ENCODE measurements at regions of chr5 and their contacts with region 1.

Region 1: DNA sequence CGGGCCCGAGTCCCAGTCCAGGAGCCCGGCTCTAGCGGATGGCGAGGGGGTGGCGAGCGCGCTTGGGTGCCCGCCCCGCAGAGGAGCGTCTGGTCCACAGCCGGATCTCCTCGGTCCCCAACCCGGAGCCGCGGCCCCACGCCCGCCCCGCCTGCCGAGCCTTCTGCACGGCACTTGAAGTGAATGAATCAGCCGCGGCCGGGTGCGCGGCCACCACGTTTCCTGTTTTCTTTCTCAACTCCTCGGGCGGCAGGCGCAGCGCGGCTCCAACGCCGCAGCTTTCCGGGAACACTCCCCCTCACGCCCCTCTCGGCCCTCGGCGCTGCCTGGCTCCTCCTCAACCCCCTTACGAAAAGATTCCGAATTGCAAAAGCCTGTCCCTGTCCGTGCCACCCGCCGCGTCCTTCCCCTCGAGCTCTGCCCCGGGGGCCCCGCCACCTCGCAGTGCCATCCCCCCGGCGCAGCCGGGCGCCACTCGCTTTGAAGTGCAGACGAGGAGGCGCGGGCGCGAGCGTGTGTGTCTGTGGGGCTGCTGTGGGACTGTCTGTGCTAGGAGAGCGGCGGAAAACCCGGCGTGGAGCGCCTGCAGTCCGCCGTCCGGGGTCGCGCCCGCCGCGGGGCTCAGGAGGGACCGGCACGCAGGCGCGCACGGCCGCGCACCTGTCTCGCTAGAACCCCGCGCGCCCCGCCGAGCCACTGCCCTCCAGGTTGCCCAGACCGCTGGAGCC is 456.6 kb downstream of the RAB3C start:
- DNase-seq: peak; percentile 61
- ATAC-seq: peak; percentile 75
- H3K4me3 Mint-ChIP-seq: peak overlapping the region; percentile 94
- H3K27ac Mint-ChIP-seq: peak overlapping the region; percentile 85
- H3K4me1 Mint-ChIP-seq: peaks cover 30% of the 10 kb centered on the region
- H3K27me3 Mint-ChIP-seq: peaks cover 14% of the 10 kb centered on the region
- CTCF ChIP-seq: no peak

Region 2: GRCh38 chr5:59062986-59063683 is 23.7 kb after region 1 on chr5:
- CTCF ChIA-PET with region 1: no interaction called
- POLR2A ChIA-PET with region 1: no interaction called
- intact Hi-C with region 1: no loop called
- DNase-seq: no peak
- ATAC-seq: no peak
- H3K4me3 Mint-ChIP-seq: no peak overlapping the region
- H3K27ac Mint-ChIP-seq: no peak overlapping the region
- H3K4me1 Mint-ChIP-seq: no peaks in the 10 kb centered on the region
- H3K27me3 Mint-ChIP-seq: no peaks in the 10 kb centered on the region
- CTCF ChIP-seq: no peak

Region 3: DNA sequence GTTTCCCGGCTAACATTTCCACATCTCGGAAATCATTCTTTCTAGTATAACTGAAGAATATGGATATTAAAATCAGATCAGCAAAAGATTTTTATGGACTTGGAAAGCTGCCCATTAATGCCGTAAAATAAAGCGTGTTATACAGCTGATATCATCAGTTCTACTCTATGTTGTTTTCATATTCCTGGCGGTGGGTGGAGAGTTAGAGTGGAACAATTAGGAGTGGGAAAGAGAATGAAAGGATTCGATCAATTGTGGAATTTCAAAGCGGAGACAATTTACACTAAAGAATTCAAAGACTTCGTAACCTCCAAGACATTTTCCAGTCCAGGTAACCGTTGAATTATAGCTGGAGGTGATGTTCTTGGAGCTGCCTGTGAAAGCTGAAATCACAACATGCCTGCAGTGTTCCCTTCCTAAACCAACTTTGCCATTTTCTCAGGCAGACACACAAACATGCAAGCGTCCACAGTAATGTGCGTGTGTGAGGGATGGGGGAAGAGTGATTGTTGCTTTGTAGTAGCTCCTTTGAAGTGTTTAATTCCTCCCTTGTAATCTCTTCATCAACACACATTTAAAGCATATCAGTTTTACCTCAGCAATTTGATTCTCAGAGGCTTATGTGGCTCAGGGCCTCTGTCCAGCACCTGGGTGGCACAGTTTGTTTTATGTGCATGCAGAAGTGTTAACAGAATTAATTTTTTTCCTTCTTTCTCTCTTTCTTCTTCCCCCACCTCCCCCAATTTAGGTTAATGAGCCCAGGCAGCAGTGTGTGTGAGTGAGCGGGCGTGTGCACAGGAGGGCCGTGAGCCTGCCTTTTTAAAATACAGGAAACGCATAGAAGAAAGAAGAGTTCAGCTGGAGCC is 87.5 kb after region 1 on chr5:
- CTCF ChIA-PET with region 1: interaction called, 4 read pairs
- POLR2A ChIA-PET with region 1: interaction called, 24 read pairs
- intact Hi-C with region 1: loop called (anchors 1 kb)
- DNase-seq: no peak
- ATAC-seq: no peak
- H3K4me3 Mint-ChIP-seq: no peak overlapping the region
- H3K27ac Mint-ChIP-seq: no peak overlapping the region
- H3K4me1 Mint-ChIP-seq: peaks cover 7% of the 10 kb centered on the region
- H3K27me3 Mint-ChIP-seq: no peaks in the 10 kb centered on the region
- CTCF ChIP-seq: no peak

Region 4: GRCh38 chr5:59174248-59174844 is 134.9 kb after region 1 on chr5:
- CTCF ChIA-PET with region 1: interaction called, 31 read pairs
- POLR2A ChIA-PET with region 1: interaction called, 3 read pairs
- intact Hi-C with region 1: loop called (anchors 1 kb)
- DNase-seq: no peak
- ATAC-seq: peak; percentile 50
- H3K4me3 Mint-ChIP-seq: no peak overlapping the region
- H3K27ac Mint-ChIP-seq: no peak overlapping the region
- H3K4me1 Mint-ChIP-seq: peaks cover 6% of the 10 kb centered on the region
- H3K27me3 Mint-ChIP-seq: no peaks in the 10 kb centered on the region
- CTCF ChIP-seq: no peak

Region 5: DNA sequence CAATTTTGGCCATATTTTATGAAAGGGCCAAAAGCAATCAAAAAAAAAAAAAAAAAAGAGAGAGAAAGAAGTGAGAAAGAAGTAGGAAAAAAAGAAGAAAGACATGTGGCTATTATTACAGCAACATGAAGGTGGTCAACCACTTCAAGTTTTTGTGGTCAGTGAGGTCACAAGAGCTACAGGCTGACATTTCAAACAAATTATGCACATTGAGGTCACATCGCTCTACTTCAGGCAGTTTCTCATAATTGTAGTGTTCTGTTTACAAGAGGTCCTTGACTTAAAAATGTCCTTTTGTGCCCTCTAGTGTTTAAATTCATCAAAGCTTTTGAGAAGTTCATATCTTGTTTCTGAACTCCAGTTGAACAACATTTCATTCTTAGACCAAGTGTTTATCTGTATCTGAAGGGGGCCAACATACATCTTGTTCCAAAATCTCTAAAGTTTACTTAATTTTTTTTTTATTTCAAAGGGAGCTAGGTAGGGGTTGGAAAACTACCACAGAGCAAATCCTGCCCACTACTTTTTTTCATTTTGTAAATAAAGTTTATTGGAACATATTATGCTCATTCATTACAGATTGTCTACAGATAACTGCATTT is 341.0 kb after region 1 on chr5:
- CTCF ChIA-PET with region 1: no interaction called
- POLR2A ChIA-PET with region 1: no interaction called
- intact Hi-C with region 1: loop called (anchors 2 kb)
- DNase-seq: no peak
- ATAC-seq: peak; percentile 52
- H3K4me3 Mint-ChIP-seq: no peak overlapping the region
- H3K27ac Mint-ChIP-seq: no peak overlapping the region
- H3K4me1 Mint-ChIP-seq: peaks cover 4% of the 10 kb centered on the region
- H3K27me3 Mint-ChIP-seq: no peaks in the 10 kb centered on the region
- CTCF ChIP-seq: no peak